ENCODE measurements at regions of chr6 and their contacts with region 1.

Region 1: GRCh38 chr6:154156135-154156896 is 117.3 kb downstream of the OPRM1 start:
- DNase-seq: peak; percentile 36 to 46
- ATAC-seq: peak; percentile 91

Region 2: DNA sequence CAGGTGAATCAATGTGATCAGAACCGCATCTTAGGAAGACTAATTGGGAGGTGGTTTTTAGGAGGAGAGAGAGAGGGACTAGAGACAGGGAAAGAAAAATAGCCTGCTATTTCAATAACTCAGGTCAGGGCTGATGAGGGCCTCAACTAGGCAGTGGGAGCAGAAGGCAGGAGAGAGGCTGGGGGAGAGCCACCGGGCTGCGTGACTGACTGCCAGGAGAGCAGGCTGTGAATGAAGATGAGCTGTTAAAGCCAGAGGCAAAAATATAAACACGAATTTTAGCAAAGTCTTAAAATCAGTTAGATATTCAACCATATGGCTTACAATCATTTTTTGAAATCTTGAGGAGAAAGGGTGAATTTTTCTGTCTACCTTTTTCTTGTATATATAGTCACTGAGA is 50.7 kb after region 1 on chr6:
- intact Hi-C with region 1: no loop called
- DNase-seq: no peak
- ATAC-seq: no peak

Region 3: DNA sequence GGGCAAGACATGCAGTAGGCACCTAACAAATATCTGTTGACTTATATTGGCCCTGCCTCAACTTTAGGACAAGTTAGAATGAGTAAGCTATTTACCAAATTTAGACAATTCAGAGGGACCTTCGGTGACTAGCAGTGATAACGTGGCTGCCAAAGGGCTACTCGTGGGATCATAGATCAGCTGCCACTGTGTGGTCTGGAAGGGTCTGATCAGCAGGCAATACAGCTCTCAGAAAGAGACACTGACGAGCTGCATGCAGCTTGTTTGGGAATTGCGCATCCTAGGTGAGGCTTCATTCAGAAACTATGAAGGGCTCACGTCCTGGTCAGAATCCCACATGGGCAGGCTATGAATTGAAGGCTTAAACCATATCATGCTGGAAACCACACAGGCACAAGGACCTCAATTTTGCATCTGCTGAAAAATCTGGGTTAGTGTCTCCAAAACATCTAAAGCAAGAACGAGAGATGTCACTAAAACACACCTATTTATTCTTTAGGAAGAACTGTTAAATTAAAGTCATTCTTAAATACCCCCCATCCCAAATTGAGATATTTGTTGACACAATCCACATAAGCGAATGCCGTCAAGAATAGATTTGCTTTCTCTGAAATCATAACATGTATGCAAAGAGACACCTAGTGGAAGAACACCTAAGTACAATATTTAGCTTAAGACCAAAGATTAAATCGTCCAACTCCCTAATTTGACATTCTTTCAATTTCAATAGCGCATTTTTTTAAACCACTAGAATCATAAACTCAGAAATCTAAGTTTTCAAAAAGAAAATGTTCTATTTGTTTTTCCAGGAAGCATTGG is 120.7 kb after region 1 on chr6:
- intact Hi-C with region 1: loop called (anchors 5 to 10 kb)
- DNase-seq: no peak
- ATAC-seq: peak; percentile 54

Region 4: GRCh38 chr6:154408891-154409500 is 252.7 kb after region 1 on chr6:
- intact Hi-C with region 1: loop called in 1 of 2 experiments (anchors 10 kb)
- DNase-seq: peak in 1 of 2 donors; percentile 23
- ATAC-seq: peak; percentile 68